Left lung (tissue), 14 donors: ENCODE measurements at regions of chr14 and their contacts with region 1.

Region 1: GRCh38 chr14:56474419-56475022 is 105.1 kb upstream of the TMEM260 start:
- DNase-seq: peak in 1 of 4 donors; percentile 44
- ATAC-seq: peak; percentile 74
- H3K4me3 ChIP-seq: no peak overlapping the region
- H3K27ac ChIP-seq: no peak overlapping the region
- H3K4me1 ChIP-seq: no peaks in the 10 kb centered on the region
- H3K27me3 ChIP-seq: peaks cover 0 to 2% of the 10 kb centered on the region in 2 donors
- CTCF ChIP-seq: peak; percentile 64 to 80

Region 2: DNA sequence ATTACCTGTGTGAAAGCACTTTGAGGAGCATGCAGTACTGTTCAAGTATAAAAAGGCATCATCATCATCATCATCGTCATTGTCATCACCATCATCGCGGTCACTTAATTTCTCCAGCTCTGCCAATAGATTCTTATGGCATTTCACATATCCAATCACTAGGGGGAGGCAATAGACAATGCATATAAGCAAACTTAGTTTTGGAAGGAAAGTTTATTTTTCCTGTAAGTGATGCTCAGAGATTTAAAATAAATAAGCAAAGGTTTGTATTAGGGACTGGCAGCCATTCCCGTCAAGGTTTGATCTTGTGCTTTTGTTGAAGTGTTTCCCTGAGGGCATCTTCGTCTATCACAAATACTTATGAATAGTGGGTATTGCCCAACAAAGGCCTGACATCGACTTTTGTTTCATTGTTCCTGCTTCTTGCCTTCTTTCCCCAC is 767.1 kb before region 1 on chr14:
- intact Hi-C with region 1: loop called in 1 of 2 experiments (anchors 10 kb)
- DNase-seq: peak in 2 of 4 donors; percentile 50 to 56
- ATAC-seq: peak; percentile 59
- H3K4me3 ChIP-seq: no peak overlapping the region
- H3K27ac ChIP-seq: no peak overlapping the region
- H3K4me1 ChIP-seq: peaks cover 0 to 8% of the 10 kb centered on the region in 2 donors
- H3K27me3 ChIP-seq: no peaks in the 10 kb centered on the region
- CTCF ChIP-seq: peak; percentile 49

Region 3: DNA sequence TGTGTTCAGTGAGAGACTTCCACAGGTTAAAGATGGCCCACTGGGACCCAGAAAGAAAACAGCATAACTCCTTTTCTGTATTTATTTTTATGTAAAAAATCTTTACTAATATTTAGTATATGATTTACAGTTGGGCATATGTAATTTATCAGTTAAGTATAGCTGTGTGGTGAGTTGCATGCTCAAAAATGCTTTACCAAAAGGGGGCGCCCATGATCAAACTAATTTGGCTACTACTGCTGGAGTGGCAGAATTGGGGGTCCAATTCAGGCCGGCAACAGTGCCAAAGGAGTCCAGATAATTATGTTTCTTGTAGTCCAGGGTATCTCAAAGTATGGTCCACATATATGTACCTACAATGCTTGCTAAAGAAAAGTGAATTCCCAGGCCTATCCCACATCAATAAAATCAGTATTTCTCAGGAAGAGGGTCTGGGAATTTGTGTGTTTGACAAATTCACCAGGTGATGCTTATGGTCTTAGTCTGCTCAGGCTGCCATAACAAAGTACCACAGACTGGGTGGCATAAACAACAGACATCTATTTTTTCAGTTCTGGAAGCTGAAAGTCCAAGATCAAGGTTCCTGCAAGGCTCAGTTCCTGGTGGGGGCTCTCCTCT is 742.5 kb before region 1 on chr14:
- intact Hi-C with region 1: loop called in 1 of 2 experiments (anchors 10 kb)
- DNase-seq: peak in 1 of 4 donors; percentile 33
- ATAC-seq: peak; percentile 82
- H3K4me3 ChIP-seq: no peak overlapping the region
- H3K27ac ChIP-seq: no peak overlapping the region
- H3K4me1 ChIP-seq: no peaks in the 10 kb centered on the region
- H3K27me3 ChIP-seq: no peaks in the 10 kb centered on the region
- CTCF ChIP-seq: peak; percentile 42 to 62